Lower leg skin (tissue), 4 donors: ENCODE measurements at regions of chr1 and their contacts with region 1.

Region 1: DNA sequence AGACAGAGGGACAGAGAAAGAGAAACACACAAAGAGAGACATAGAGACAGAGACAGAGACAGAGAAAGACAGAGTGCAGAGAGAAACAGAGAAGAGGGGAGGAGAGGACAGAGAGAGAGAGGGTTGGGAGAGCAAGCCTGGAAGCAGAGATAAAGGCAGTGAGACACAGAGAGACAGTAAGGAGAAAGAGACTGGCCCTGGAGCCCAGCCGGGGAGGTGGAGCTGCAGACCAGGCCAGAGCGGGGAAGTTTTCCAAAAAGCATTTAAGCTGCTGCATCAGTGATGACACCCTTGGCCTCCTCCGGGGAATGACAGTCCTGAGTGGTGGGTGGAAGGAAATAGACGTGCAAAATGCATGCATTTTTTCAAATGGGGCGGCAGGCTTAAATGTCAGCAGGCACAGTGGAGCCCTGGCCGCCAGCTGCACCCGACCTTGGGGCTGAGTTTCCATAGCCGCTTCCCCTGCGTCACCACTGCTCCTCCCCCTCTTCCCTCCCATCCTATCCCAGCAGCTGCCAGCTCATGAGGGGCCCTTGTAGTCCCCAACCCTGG is 95.4 kb upstream of the KLHDC7A start:
- DNase-seq: no peak
- H3K4me3 ChIP-seq: no peak overlapping the region
- CTCF ChIP-seq: no peak
- POLR2A ChIP-seq: no peak

Region 2: DNA sequence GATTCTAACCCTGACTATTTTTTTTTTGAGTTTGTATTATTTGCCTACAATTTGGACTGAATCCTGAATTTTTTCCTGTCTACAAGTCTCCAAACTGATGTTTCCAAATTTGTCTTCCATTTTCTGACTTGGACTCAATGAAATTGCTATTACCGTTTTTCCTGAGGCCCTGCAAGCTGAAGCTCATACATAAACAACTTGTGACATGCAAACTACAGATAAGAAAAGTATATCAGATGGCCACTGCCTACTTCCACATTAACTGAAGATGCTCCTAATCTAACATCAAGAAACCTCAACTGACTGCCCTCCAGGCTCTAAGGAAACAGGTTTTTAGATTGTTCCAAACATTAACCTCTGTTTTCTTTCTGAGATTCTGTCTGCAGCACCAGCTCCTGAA is 44.3 kb after region 1 on chr1:
- intact Hi-C with region 1: loop called (anchors 1 kb)
- DNase-seq: no peak
- H3K4me3 ChIP-seq: no peak overlapping the region
- CTCF ChIP-seq: no peak
- POLR2A ChIP-seq: no peak